H1 (cell line): ENCODE measurements at regions of chr9 and their contacts with region 1.

Region 1: DNA sequence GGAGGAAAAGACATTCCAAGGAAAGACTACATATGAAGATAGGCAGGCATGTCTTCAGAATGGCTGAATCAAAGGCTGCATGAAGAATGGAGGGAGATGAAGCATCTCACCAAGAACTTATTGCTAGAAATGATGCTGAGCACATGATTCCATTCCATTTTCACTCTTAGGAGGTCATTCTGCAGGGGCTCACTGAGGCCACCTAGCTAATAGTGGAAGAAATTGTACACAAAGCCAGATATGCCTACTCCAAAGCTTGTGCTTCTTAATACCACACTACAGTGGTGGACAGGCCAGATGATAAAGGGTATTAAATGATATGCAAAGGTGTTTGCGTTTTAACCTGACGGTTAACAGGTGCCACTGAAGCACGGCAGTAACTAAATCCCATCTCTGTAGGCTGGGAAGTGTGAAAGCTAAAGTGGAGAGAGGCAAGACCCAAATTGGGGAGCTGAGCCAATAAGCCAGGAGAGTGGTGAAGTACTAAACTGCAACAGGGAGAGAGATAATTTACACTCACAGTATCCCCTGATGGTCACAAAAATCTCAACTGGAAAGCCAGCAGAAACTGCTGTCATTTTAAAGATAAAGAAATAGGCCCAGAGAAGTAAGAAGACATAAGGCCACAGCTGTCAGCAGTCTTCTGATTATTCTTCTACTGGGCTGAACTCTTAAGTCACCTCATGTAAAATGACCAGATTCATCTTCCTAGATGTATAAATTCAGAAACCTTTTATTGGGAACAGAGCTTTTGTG is 14.6 kb downstream of the NDUFA8 start:
- DNase-seq: no peak
- H3K4me3 ChIP-seq: no peak overlapping the region
- H3K27ac ChIP-seq: no peak overlapping the region
- H3K4me1 ChIP-seq: no peaks in the 10 kb centered on the region
- H3K27me3 ChIP-seq: no peaks in the 10 kb centered on the region
- CTCF ChIP-seq: peak in 2 of 3 experiments; percentile 16 to 52; a peak in 2 of 4 replicates
- EP300 ChIP-seq: no peak
- POLR2A ChIP-seq: no peak
- RAD21 ChIP-seq: peak; percentile 9 to 31; a peak in 2 of 4 replicates

Region 2: DNA sequence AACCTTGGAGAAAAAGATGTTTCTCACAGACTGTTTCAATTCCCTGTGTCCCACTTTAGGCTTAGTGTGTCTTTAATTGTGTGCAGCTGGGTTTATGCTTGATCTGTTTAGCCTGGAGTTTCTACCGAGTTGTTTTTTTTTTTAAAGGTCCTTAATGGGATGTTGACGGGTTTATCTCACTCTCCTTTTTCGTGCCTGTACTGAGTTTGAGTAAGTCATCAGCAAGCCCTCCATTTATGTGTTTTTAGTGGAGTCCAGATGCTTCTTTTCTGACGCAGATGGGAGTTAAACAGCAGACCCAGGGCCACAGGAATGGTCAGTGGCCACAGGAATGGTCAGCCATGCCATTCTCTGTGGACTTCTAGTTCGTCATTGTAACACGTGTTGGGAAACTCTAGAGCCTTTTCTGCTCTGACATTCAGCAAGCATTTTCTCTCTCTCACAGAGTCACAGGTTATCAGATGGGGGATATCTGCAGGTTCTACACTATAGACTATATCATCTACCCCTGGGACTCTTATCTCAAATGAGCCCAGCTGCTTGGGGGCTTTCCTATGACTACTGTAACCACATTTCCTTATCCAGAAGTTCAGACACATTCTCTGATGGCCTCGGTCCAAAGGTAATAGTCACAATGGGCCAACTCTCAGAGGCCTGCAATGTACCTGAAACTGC is 242.4 kb before region 1 on chr9:
- CTCF ChIA-PET with region 1: no interaction called
- POLR2A ChIA-PET with region 1: no interaction called
- DNase-seq: no peak
- H3K4me3 ChIP-seq: no peak overlapping the region
- H3K27ac ChIP-seq: no peak overlapping the region
- H3K4me1 ChIP-seq: no peaks in the 10 kb centered on the region
- H3K27me3 ChIP-seq: no peaks in the 10 kb centered on the region
- CTCF ChIP-seq: no peak
- EP300 ChIP-seq: no peak
- POLR2A ChIP-seq: no peak
- RAD21 ChIP-seq: no peak

Region 3: DNA sequence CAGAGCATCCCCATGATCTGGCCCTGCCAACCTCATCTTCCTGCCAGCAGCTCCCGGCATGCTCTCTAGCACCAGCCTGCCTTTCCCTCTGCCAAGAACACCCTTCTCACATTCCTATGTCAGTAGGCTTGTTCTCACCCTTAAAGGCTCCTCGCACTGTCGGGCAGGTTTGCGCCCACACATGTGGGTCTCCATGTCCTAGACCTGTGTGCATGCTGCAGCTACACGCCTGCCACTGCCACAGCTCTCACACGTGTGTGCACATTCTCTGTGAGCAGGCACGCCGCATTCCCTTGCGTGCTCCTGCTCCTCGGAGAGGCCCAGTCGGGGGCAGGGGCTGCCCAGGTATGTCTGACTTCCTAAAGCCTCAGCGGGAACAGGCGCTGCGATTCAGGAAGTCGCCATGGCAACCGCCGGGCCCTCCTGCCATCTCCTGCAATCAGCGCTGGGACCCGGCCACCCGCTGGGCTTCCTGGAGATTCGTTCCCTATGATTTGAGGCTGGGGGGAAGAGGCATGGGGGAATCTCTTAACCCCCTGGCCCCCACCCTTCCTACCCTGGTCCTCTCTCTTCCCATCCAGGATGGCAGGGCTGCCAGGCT is 13.5 kb before region 1 on chr9:
- CTCF ChIA-PET with region 1: interaction called, 152 read pairs
- POLR2A ChIA-PET with region 1: no interaction called
- DNase-seq: peak in 1 of 2 experiments; percentile 81
- H3K4me3 ChIP-seq: peak overlapping the region in 2 of 4 experiments; percentile 19 to 31; a peak in 4 of 8 replicates
- H3K27ac ChIP-seq: no peak overlapping the region
- H3K4me1 ChIP-seq: peaks cover 14 to 21% (median 17%) of the 10 kb centered on the region in 4 experiments
- H3K27me3 ChIP-seq: peaks cover 0 to 17% (median 14%) of the 10 kb centered on the region in 4 experiments; a peak in 6 of 7 replicates
- CTCF ChIP-seq: no peak
- EP300 ChIP-seq: no peak
- POLR2A ChIP-seq: no peak
- RAD21 ChIP-seq: no peak

Region 4: GRCh38 chr9:122286764-122287163 is 141.8 kb after region 1 on chr9:
- CTCF ChIA-PET with region 1: no interaction called
- POLR2A ChIA-PET with region 1: no interaction called
- DNase-seq: no peak
- H3K4me3 ChIP-seq: no peak overlapping the region
- H3K27ac ChIP-seq: no peak overlapping the region
- H3K4me1 ChIP-seq: no peaks in the 10 kb centered on the region; a peak in 1 of 7 replicates
- H3K27me3 ChIP-seq: no peaks in the 10 kb centered on the region
- CTCF ChIP-seq: no peak
- EP300 ChIP-seq: no peak
- POLR2A ChIP-seq: no peak
- RAD21 ChIP-seq: no peak